ENCODE measurements at regions of chr5 and their contacts with region 1.

Region 1: GRCh38 chr5:5421961-5422818 is at the start of gene ICE1:
- DNase-seq: peak; percentile 95 to 99
- H3K4me3 ChIP-seq: peak within 1 kb of the TSS; percentile 84 to 99
- H3K27ac ChIP-seq: peak within 1 kb of the TSS; percentile 94 to 95
- H3K4me1 ChIP-seq: peaks cover 15 to 27% of the 10 kb centered on the region in 2 donors
- H3K27me3 ChIP-seq: no peaks in the 10 kb centered on the region
- CTCF ChIP-seq: no peak
- total RNA-seq, gene ICE1: 13.5 TPM

Region 2: GRCh38 chr5:4879693-4880303 is 542.4 kb before region 1 on chr5:
- intact Hi-C with region 1: loop called (anchors 10 kb)
- DNase-seq: peak in 1 of 2 donors; percentile 71
- H3K4me3 ChIP-seq: no peak overlapping the region
- H3K27ac ChIP-seq: no peak overlapping the region
- H3K4me1 ChIP-seq: no peaks in the 10 kb centered on the region
- H3K27me3 ChIP-seq: no peaks in the 10 kb centered on the region
- CTCF ChIP-seq: peak; percentile 32 to 65 (median 56)

Region 3: GRCh38 chr5:5141625-5142532 is 280.3 kb before region 1 on chr5:
- intact Hi-C with region 1: loop called (anchors 1 kb)
- DNase-seq: no peak
- H3K4me3 ChIP-seq: peak overlapping the region in 1 of 2 donors; percentile 17
- H3K27ac ChIP-seq: no peak overlapping the region
- H3K4me1 ChIP-seq: peaks cover 0 to 19% of the 10 kb centered on the region in 2 donors
- H3K27me3 ChIP-seq: peaks cover 6% of the 10 kb centered on the region
- CTCF ChIP-seq: peak; percentile 14 to 68 (median 65)

Region 4: GRCh38 chr5:5572010-5572865 is 150.0 kb after region 1 on chr5:
- intact Hi-C with region 1: loop called (anchors 5 kb)
- DNase-seq: peak; percentile 51 to 91
- H3K4me3 ChIP-seq: peak overlapping the region; percentile 1 to 49
- H3K27ac ChIP-seq: peak overlapping the region; percentile 81 to 84
- H3K4me1 ChIP-seq: peaks cover 8 to 24% of the 10 kb centered on the region in 2 donors
- H3K27me3 ChIP-seq: no peaks in the 10 kb centered on the region
- CTCF ChIP-seq: no peak

Region 5: DNA sequence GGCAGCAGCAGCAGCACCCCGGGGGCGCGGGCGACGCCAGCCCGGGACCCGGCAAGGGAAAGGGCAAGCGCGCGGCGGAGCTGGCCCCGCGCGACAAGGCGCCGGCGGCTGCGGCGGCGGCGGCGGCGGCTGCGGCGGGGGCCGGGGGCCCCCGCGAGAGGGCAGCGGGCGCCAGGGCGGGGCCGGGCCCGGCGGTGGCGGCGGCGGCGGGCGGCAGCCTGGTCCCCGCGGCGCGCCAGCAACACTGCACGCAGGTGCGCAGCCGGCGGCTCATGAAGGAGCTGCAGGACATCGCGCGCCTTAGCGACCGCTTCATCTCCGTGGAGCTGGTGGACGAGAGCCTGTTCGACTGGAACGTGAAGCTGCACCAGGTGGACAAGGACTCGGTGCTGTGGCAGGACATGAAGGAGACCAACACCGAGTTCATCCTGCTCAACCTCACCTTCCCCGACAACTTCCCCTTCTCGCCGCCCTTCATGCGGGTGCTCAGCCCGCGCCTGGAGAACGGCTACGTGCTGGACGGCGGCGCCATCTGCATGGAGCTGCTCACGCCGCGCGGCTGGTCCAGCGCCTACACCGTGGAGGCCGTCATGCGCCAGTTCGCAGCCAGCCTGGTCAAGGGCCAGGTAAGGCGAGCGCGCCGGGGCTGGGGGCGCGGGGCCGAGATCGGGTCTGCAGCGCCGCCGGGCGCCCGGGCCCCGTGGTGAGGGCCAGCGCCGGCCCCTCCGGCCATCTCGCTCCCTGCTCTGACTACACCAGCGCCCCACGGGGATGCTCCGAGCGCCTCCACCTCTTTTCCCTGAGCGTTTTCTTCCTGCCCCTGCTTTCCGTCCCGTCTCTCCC is 1026.7 kb after region 1 on chr5 and contains the start of gene UBE2QL1:
- intact Hi-C with region 1: loop called (anchors 10 kb)
- DNase-seq: no peak
- H3K4me3 ChIP-seq: peak within 1 kb of the TSS; percentile 67 to 72
- H3K27ac ChIP-seq: peak within 1 kb of the TSS in 1 of 2 donors; percentile 40
- H3K4me1 ChIP-seq: peaks cover 0 to 14% of the 10 kb centered on the region in 2 donors
- H3K27me3 ChIP-seq: no peaks in the 10 kb centered on the region
- CTCF ChIP-seq: no peak
- total RNA-seq, gene UBE2QL1: 0.85 TPM

Region 6: GRCh38 chr5:6632917-6633468 is 1210.8 kb after region 1 on chr5 and contains the starts of genes NSUN2 and SRD5A1:
- intact Hi-C with region 1: loop called (anchors 2 kb)
- DNase-seq: peak; percentile 56 to 95
- H3K4me3 ChIP-seq: peak within 1 kb of the TSS; percentile 74 to 87
- H3K27ac ChIP-seq: peak within 1 kb of the TSS; percentile 83 to 97
- H3K4me1 ChIP-seq: peaks cover 0 to 14% of the 10 kb centered on the region in 2 donors
- H3K27me3 ChIP-seq: no peaks in the 10 kb centered on the region
- CTCF ChIP-seq: no peak
- total RNA-seq, gene NSUN2: 19.1 TPM
- total RNA-seq, gene SRD5A1: 186 TPM

Region 7: GRCh38 chr5:6732634-6733410 is 1310.6 kb after region 1 on chr5:
- intact Hi-C with region 1: loop called (anchors 5 kb)
- DNase-seq: peak in 1 of 2 donors; percentile 83
- H3K4me3 ChIP-seq: peak overlapping the region; percentile 20 to 44
- H3K27ac ChIP-seq: peak overlapping the region; percentile 81 to 91
- H3K4me1 ChIP-seq: peaks cover 23 to 46% of the 10 kb centered on the region in 2 donors
- H3K27me3 ChIP-seq: no peaks in the 10 kb centered on the region
- CTCF ChIP-seq: no peak

Measured in ascending aorta (tissue), 2 donors.